CD8-positive, alpha-beta T cell (primary cell): ENCODE measurements at regions of chr11 and their contacts with region 1.

Region 1: GRCh38 chr11:108871152-108871551 is 206.3 kb downstream of the DDX10 start:
- DNase-seq: peak in 3 of 9 experiments; percentile 7 to 41 (median 21)
- ATAC-seq: no peak
- H3K4me3 ChIP-seq: no peak overlapping the region
- H3K4me3 Mint-ChIP-seq: no peak overlapping the region
- H3K27ac ChIP-seq: no peak overlapping the region
- H3K27ac Mint-ChIP-seq: no peak overlapping the region
- H3K4me1 ChIP-seq: no peaks in the 10 kb centered on the region
- H3K4me1 Mint-ChIP-seq: peaks cover 7% of the 10 kb centered on the region
- H3K27me3 ChIP-seq: no peaks in the 10 kb centered on the region
- H3K27me3 Mint-ChIP-seq: no peaks in the 10 kb centered on the region
- CTCF ChIP-seq: no peak

Region 2: GRCh38 chr11:108697872-108698473 is 173.2 kb before region 1 on chr11:
- CTCF ChIA-PET with region 1: no interaction called
- POLR2A ChIA-PET with region 1: no interaction called
- intact Hi-C with region 1: loop called (anchors 5 to 10 kb)
- DNase-seq: peak in 4 of 9 experiments; percentile 13 to 58 (median 40)
- ATAC-seq: peak; percentile 62
- H3K4me3 ChIP-seq: no peak overlapping the region
- H3K4me3 Mint-ChIP-seq: no peak overlapping the region
- H3K27ac ChIP-seq: no peak overlapping the region
- H3K27ac Mint-ChIP-seq: no peak overlapping the region
- H3K4me1 ChIP-seq: no peaks in the 10 kb centered on the region
- H3K4me1 Mint-ChIP-seq: no peaks in the 10 kb centered on the region
- H3K27me3 ChIP-seq: no peaks in the 10 kb centered on the region
- H3K27me3 Mint-ChIP-seq: no peaks in the 10 kb centered on the region
- CTCF ChIP-seq: peak; percentile 61

Region 3: GRCh38 chr11:108703916-108704315 is 167.2 kb before region 1 on chr11:
- CTCF ChIA-PET with region 1: no interaction called
- POLR2A ChIA-PET with region 1: no interaction called
- intact Hi-C with region 1: loop called (anchors 5 to 10 kb)
- DNase-seq: no peak
- ATAC-seq: no peak
- H3K4me3 ChIP-seq: no peak overlapping the region
- H3K4me3 Mint-ChIP-seq: no peak overlapping the region
- H3K27ac ChIP-seq: no peak overlapping the region
- H3K27ac Mint-ChIP-seq: no peak overlapping the region
- H3K4me1 ChIP-seq: no peaks in the 10 kb centered on the region
- H3K4me1 Mint-ChIP-seq: no peaks in the 10 kb centered on the region
- H3K27me3 ChIP-seq: no peaks in the 10 kb centered on the region
- H3K27me3 Mint-ChIP-seq: no peaks in the 10 kb centered on the region
- CTCF ChIP-seq: no peak

Region 4: GRCh38 chr11:108788565-108789199 is 82.5 kb before region 1 on chr11:
- CTCF ChIA-PET with region 1: no interaction called
- POLR2A ChIA-PET with region 1: no interaction called
- intact Hi-C with region 1: no loop called
- DNase-seq: peak in 2 of 9 experiments; percentile 2 to 5
- ATAC-seq: no peak
- H3K4me3 ChIP-seq: no peak overlapping the region
- H3K4me3 Mint-ChIP-seq: no peak overlapping the region
- H3K27ac ChIP-seq: no peak overlapping the region
- H3K27ac Mint-ChIP-seq: no peak overlapping the region
- H3K4me1 ChIP-seq: peaks cover 6% of the 10 kb centered on the region
- H3K4me1 Mint-ChIP-seq: peaks cover 59% of the 10 kb centered on the region
- H3K27me3 ChIP-seq: no peaks in the 10 kb centered on the region
- H3K27me3 Mint-ChIP-seq: no peaks in the 10 kb centered on the region
- CTCF ChIP-seq: no peak

Region 5: DNA sequence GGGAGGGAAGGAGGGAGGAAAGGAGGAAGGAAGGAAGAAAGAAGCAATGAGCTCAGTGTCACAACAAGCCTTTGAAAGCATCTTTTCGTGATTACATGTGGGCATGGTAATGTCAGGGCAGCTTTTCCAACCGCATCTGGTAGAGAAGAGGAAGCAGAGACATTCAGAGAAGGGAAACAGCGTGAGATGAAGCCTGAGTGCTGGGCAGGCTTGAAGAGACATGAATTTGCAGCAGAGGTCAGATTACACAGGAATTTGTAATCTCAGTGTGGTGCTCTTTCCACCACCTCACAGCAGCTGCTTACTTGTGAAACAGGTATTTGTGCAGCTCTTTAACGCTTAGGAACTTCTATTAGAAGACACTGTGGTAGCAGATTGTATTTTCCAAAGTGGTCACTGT is 261.4 kb after region 1 on chr11:
- CTCF ChIA-PET with region 1: no interaction called
- POLR2A ChIA-PET with region 1: no interaction called
- intact Hi-C with region 1: no loop called
- DNase-seq: no peak
- ATAC-seq: no peak
- H3K4me3 ChIP-seq: no peak overlapping the region
- H3K4me3 Mint-ChIP-seq: no peak overlapping the region
- H3K27ac ChIP-seq: no peak overlapping the region
- H3K27ac Mint-ChIP-seq: no peak overlapping the region
- H3K4me1 ChIP-seq: no peaks in the 10 kb centered on the region
- H3K4me1 Mint-ChIP-seq: no peaks in the 10 kb centered on the region
- H3K27me3 ChIP-seq: no peaks in the 10 kb centered on the region
- H3K27me3 Mint-ChIP-seq: no peaks in the 10 kb centered on the region
- CTCF ChIP-seq: no peak

Region 6: DNA sequence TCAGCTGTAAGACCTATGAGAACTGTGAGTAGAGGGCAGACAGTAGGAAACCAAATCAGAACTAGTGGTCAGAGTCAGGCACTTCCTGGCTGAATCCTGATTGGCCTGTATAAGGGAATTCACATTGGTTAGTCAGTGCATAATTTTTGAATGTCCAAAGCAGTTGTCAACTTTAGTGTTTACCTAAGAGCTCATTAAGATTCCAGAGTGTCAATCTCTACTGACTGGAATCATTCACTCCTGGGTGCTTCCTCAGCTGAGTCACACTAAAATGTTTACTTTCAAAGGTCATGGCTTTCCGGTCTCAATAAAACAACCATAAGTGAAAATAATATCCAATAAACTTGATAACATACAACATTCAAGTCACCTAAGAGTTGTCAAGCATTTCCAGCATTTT is 856.9 kb after region 1 on chr11:
- CTCF ChIA-PET with region 1: no interaction called
- POLR2A ChIA-PET with region 1: no interaction called
- intact Hi-C with region 1: loop called in 1 of 2 experiments (anchors 5 kb)
- DNase-seq: no peak
- ATAC-seq: no peak
- H3K4me3 ChIP-seq: no peak overlapping the region
- H3K4me3 Mint-ChIP-seq: no peak overlapping the region
- H3K27ac ChIP-seq: no peak overlapping the region
- H3K27ac Mint-ChIP-seq: no peak overlapping the region
- H3K4me1 ChIP-seq: no peaks in the 10 kb centered on the region
- H3K4me1 Mint-ChIP-seq: no peaks in the 10 kb centered on the region
- H3K27me3 ChIP-seq: no peaks in the 10 kb centered on the region
- H3K27me3 Mint-ChIP-seq: no peaks in the 10 kb centered on the region
- CTCF ChIP-seq: no peak